ENCODE measurements at regions of chr1 and their contacts with region 1.

Region 1: GRCh38 chr1:155208541-155209311 is at the start of gene MTX1:
- H3K4me3 ChIP-seq: peak within 1 kb of the TSS; percentile 98
- H3K27ac ChIP-seq: peak within 1 kb of the TSS; percentile 86; the same call in 1 of the 2 replicates
- H3K4me1 ChIP-seq: peaks cover 4% of the 10 kb centered on the region
- CTCF ChIP-seq: 0 out of 2 replicates have a peak, but pooled peaks have one; percentile 4

Region 2: GRCh38 chr1:154896771-154897391 is 311.8 kb before region 1 on chr1:
- CTCF ChIA-PET with region 1: no interaction called
- POLR2A ChIA-PET with region 1: no interaction called
- H3K4me3 ChIP-seq: no peak overlapping the region
- H3K27ac ChIP-seq: no peak overlapping the region
- H3K4me1 ChIP-seq: no peaks in the 10 kb centered on the region
- CTCF ChIP-seq: no peak

Region 3: GRCh38 chr1:155001675-155002463 is 206.9 kb before region 1 on chr1:
- CTCF ChIA-PET with region 1: no interaction called
- POLR2A ChIA-PET with region 1: no interaction called
- H3K4me3 ChIP-seq: peak overlapping the region; percentile 50
- H3K27ac ChIP-seq: peak overlapping the region; percentile 83; the same call in 1 of the 2 replicates
- H3K4me1 ChIP-seq: peaks cover 13% of the 10 kb centered on the region
- CTCF ChIP-seq: peak; percentile 95

Region 4: DNA sequence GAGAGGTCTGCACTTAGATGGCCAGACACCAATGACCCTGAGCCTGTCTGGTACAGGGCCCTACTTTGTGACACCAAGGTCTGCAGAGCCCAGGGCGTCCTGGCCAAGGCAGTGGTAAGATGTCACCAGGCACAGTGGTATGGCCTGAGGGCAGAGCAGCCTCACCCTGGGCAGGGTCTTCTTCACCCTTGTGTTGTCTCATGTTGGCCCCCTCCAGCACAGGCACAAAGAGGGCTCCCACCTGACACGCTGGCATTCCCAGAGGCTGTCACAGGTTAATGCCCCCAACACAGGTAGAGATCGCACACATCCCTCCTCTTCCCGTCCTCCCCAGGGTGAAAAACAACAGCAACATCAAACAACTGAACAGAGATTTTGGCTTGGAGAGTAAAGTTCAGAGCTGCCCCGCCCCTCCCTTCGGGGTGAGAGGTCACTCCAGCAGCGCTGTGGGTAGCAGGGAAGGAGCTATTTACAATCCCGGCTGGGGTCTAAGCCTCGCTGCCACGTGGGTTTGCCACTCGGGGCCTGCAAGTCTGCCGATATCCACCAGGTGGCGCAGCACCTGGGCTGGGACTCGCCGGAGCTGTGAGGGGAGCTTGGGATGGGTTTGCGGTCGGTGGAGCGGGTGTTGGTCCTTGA is 117.5 kb before region 1 on chr1:
- CTCF ChIA-PET with region 1: no interaction called
- POLR2A ChIA-PET with region 1: no interaction called
- H3K4me3 ChIP-seq: no peak overlapping the region
- H3K27ac ChIP-seq: no peak overlapping the region
- H3K4me1 ChIP-seq: peaks cover 13% of the 10 kb centered on the region
- CTCF ChIP-seq: peak; percentile 92

Region 5: GRCh38 chr1:155193275-155193990 is 15.3 kb before region 1 on chr1:
- CTCF ChIA-PET with region 1: interaction called, 28 read pairs
- POLR2A ChIA-PET with region 1: interaction called, 7 read pairs
- H3K4me3 ChIP-seq: peak overlapping the region; percentile 40
- H3K27ac ChIP-seq: peak overlapping the region; percentile 42; the same call in 1 of the 2 replicates
- H3K4me1 ChIP-seq: peaks cover 3% of the 10 kb centered on the region; the same call in 1 of the 2 replicates
- CTCF ChIP-seq: peak; percentile 98

Region 6: DNA sequence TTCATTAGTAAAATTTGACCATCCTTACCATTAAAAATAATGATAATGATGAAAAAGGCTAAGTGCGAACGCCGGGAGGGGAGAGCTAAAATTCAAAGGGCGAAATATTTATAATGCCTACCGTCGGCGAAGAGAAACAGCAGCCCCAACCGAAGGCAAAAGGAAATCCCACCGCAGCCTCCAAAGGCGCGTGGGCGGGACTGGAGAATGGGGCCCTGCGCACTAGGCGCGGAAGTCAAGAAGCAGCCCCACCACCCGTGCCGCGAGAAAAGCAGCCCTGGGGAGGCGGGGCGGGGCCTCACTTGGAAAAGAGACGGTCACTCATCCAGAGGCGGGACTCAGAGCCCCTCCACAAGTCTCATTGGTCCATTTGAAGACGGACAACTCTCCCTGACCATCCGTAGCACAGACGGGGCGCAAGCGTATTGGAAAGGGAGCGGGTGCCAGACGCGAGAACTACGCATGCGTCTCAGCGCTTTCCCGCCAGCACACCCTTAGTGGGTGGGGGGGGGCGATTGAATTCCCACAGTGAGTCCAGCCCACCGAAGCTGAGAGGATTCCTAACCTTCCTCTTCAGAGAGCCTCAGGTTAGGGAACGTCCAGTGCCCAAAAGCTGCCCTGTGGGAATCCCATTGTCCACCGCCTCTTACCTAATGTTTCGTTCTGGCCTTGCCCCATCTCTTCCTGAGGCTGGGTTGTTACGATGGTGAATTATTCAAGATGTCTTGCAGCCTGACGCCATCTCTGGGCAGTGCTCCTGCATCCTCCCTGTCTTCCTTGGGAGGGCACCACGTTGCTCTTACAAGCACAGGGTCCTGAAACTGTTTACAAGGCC is 18.8 kb after region 1 on chr1:
- CTCF ChIA-PET with region 1: interaction called, 25 read pairs
- POLR2A ChIA-PET with region 1: interaction called, 8 read pairs
- H3K4me3 ChIP-seq: peak overlapping the region; percentile 53
- H3K27ac ChIP-seq: peak overlapping the region; percentile 76
- H3K4me1 ChIP-seq: peaks cover 3% of the 10 kb centered on the region
- CTCF ChIP-seq: no peak

Region 7: GRCh38 chr1:155339515-155340097 is 130.9 kb after region 1 on chr1:
- CTCF ChIA-PET with region 1: no interaction called
- POLR2A ChIA-PET with region 1: no interaction called
- H3K4me3 ChIP-seq: no peak overlapping the region
- H3K27ac ChIP-seq: no peak overlapping the region
- H3K4me1 ChIP-seq: no peaks in the 10 kb centered on the region
- CTCF ChIP-seq: no peak

Measured in HEK293 (cell line).